PC-9 (cell line): ENCODE measurements at regions of chr15 and their contacts with region 1.

Region 1: GRCh38 chr15:89599021-89599420 is 23.8 kb downstream of the TICRR start:
- DNase-seq: no peak
- H3K4me3 ChIP-seq: no peak overlapping the region
- H3K27ac ChIP-seq: no peak overlapping the region
- H3K4me1 ChIP-seq: no peaks in the 10 kb centered on the region
- H3K27me3 ChIP-seq: no peaks in the 10 kb centered on the region
- CTCF ChIP-seq: no peak

Region 2: DNA sequence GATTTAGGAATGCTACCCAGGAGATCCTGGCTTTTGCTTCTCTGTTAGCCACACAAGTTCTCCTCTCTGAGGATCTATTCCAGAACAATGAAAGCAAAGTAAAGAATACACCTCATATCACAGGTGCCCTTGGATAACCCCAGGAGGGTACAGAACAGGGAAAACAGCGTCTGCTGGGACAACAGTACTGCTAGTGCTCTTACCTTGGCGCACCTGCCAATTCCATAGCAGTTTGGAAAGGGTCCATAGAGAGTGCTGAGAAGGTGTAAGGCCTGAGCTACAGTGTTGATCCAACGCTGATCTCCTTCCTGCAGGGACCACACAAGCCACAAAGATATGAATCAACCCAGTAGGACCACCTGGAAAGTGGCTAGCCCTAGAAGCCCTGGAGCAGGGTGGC is 1408.2 kb after region 1 on chr15:
- CTCF ChIA-PET with region 1: no interaction called
- POLR2A ChIA-PET with region 1: interaction called, 11 read pairs
- intact Hi-C with region 1: no loop called
- DNase-seq: no peak
- H3K4me3 ChIP-seq: no peak overlapping the region
- H3K27ac ChIP-seq: no peak overlapping the region
- H3K4me1 ChIP-seq: no peaks in the 10 kb centered on the region
- H3K27me3 ChIP-seq: no peaks in the 10 kb centered on the region
- CTCF ChIP-seq: no peak